ENCODE measurements at regions of chr13 and their contacts with region 1.

Region 1: DNA sequence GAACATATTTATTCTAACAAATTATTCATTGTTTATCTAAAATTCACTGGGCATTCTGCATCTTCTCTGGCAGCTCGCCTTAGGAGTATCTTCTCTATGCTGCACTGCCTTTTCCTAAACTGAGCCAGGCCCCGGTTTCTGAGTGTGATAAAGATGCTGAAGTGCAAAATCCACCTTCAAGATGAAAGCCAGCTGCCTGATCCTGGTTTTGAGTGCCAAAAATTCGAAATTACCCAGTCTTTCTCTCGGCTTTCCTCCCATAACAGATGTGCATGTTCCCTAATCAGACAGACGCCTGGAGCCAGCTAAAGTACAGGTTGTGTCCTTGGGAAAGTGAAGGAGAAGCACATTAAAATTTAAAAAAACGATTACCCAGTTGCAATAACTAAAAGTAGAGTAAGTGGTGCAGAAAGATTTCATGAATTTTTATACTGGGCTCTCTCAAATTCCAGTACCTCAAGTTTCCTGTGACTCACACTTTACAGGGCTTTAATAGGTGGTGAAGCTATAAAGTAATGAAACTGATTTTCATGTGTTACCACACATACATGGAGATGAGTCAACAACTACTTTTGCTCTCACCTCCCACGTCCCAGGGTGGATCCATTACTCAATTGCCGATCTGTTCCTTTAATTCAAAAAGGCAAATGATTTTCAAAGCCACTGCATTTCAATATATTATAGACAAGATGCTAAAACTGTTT is 65.0 kb upstream of the GTF2F2 start:
- DNase-seq: peak; percentile 82
- H3K4me3 Mint-ChIP-seq: no peak overlapping the region
- H3K27ac Mint-ChIP-seq: no peak overlapping the region
- H3K4me1 Mint-ChIP-seq: peaks cover 21% of the 10 kb centered on the region
- H3K27me3 Mint-ChIP-seq: peaks cover 44% of the 10 kb centered on the region

Region 2: DNA sequence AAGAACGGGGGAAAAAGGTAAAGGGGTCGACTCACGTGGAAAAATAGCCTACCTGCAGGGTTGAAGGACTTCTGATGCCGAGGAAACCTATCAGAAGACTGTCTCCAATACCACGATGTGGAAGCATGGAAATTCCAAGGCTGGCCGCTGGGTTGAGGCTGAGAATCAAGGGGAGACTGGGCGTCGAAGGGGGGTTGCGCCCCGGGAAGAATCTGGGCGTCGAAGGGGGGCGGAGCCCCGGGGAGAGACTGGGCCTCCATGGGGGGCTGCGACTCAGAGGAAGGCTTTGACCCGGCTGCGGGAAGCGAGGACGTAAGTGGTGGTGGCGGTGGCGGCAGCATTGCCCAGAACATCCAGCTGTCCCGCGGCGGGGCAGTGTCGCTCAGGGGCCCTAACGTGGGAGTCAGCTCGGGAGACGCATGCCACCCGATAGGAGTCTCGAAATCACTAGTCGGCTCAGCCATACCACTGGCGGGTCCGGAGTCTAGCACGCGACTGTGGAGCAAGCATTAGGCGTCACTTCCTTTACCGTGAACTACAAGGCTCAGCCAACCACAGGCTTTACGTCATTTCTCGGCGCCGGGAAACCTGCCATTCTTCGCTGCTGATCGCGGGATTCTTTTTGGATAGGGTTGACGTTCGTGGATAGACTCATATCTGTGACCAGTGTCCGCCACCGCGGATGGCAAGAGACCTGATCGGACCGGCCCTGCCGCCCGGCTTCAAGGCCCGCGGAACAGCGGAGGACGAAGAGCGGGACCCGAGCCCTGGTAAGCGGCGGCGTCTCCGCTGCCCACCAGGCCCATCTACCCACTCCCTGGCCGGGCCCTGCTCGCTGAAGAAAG is 66.2 kb before region 1 on chr13 and contains the starts of genes GPALPP1 and NUFIP1:
- CTCF ChIA-PET with region 1: no interaction called
- POLR2A ChIA-PET with region 1: no interaction called
- intact Hi-C with region 1: loop called (anchors 1 kb)
- DNase-seq: peak; percentile 96
- H3K4me3 Mint-ChIP-seq: peak within 1 kb of the TSS; percentile 97
- H3K27ac Mint-ChIP-seq: peak within 1 kb of the TSS; percentile 92
- H3K4me1 Mint-ChIP-seq: peaks cover 58% of the 10 kb centered on the region
- H3K27me3 Mint-ChIP-seq: no peaks in the 10 kb centered on the region
- total RNA-seq, gene GPALPP1: 30.1 to 32.7 TPM
- total RNA-seq, gene NUFIP1: 9.3 to 9.5 TPM

Region 3: GRCh38 chr13:45206340-45206739 is 151.0 kb after region 1 on chr13:
- CTCF ChIA-PET with region 1: interaction called, 4 read pairs
- POLR2A ChIA-PET with region 1: no interaction called
- intact Hi-C with region 1: loop called (anchors 1 kb)
- DNase-seq: peak; percentile 34
- H3K4me3 Mint-ChIP-seq: no peak overlapping the region
- H3K27ac Mint-ChIP-seq: no peak overlapping the region
- H3K4me1 Mint-ChIP-seq: peaks cover 23% of the 10 kb centered on the region
- H3K27me3 Mint-ChIP-seq: no peaks in the 10 kb centered on the region

Region 4: DNA sequence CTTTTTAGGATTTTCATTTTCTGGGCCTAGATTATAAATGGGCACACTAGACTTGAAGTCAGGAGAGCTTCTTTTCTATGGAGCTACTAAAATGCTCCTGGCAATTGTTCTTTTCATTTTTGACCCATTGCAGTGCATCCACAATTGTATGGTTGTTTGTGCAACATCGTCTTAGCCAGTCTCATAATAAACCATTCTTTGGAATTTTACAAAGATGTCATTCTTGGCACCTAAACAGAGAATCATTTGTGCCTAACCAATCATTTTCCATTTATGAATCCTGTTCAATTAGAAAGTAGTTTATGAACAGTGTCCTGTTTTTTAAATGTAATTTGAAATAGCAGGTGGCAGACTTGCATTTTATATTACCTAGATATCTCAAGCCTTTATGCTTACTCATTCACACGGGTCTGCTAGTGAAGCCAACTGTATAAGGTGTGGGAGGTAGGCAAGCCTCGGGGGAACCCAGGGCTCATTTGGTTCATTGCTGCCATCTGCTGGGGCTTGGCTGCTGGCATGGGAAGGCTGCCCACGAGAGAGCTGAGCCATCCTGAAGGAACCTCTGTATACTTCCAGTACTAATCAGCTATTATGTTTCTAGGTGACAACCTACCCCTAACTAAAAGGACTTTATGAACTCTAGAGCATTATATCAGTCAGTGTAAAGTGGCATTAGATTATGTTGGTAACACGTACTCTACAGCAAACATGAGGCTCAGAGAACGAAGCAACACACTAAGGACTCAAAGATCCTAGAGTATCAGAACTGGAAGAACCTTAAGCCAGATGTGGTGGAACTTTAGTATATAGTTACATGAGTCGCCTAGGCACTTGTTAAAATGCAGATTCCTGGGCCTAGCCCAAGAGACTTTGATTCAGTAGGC is 225.6 kb after region 1 on chr13:
- CTCF ChIA-PET with region 1: interaction called, 106 read pairs
- POLR2A ChIA-PET with region 1: no interaction called
- intact Hi-C with region 1: no loop called
- DNase-seq: peak; percentile 75
- H3K4me3 Mint-ChIP-seq: no peak overlapping the region
- H3K27ac Mint-ChIP-seq: no peak overlapping the region
- H3K4me1 Mint-ChIP-seq: no peaks in the 10 kb centered on the region
- H3K27me3 Mint-ChIP-seq: no peaks in the 10 kb centered on the region